HepG2 (cell line): ENCODE measurements at regions of chr19 and their contacts with region 1.

Region 1: DNA sequence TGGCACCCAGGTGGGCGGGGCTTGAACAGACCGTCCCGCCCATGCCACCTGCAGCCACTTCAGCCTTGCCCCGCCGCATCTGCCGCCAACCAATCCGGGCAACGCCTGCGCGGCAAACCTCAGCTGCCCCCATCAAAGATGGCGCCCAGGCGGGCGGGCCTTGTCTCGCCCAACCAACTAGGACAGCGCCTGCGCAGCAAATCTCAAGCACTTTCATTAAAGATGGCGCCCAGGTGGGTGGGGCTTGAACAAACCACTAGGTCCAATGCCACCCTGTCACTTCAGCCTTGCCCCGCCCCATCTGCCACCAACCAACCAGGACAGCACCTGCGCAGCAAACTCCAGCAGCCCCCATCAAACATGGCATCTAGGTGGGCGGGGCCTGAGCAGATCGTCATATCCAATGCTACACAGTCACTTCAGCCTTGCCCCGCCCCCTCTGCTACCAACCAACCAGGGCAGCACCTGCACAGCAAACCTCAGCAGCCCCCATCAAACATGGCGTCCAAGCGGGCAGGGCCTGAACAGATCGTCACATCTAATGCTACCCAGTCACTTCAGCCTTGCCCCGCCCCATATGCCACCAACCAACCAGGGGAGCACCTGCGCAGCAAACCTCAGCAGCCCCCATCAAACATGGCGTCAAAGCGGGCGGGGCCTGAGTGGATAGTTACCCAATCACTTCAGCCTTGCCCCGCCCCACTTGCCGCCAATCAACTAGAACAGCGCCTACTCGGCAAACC is 1.4 kb downstream of the PEG3 start:
- DNase-seq: peak; percentile 97
- ATAC-seq: peak; percentile 63
- H3K4me3 ChIP-seq: peak overlapping the region; percentile 55 to 96 (median 84); a peak in 5 of 6 replicates
- H3K27ac ChIP-seq: peak overlapping the region; percentile 90
- H3K4me1 ChIP-seq: peaks cover 49% of the 10 kb centered on the region
- H3K27me3 ChIP-seq: no peaks in the 10 kb centered on the region
- CTCF ChIP-seq: no peak
- EP300 ChIP-seq: 0 out of 4 replicates have a peak, but pooled peaks of 1 of the 2 experiments have one; percentile 15
- POLR2A ChIP-seq: peak; percentile 40 to 75
- RAD21 ChIP-seq: no peak

Region 2: GRCh38 chr19:56567274-56568120 is 271.6 kb before region 1 on chr19 and contains the start of gene ZNF470:
- CTCF ChIA-PET with region 1: no interaction called
- POLR2A ChIA-PET with region 1: no interaction called
- in situ Hi-C with region 1: no loop called
- intact Hi-C with region 1: no loop called
- DNase-seq: no peak
- ATAC-seq: no peak
- H3K4me3 ChIP-seq: no peak within 1 kb of the TSS
- H3K27ac ChIP-seq: no peak within 1 kb of the TSS
- H3K4me1 ChIP-seq: no peaks in the 10 kb centered on the region
- H3K27me3 ChIP-seq: no peaks in the 10 kb centered on the region
- CTCF ChIP-seq: no peak
- EP300 ChIP-seq: no peak
- POLR2A ChIP-seq: no peak
- RAD21 ChIP-seq: no peak
- total RNA-seq, gene ZNF470: not detected in 2 replicates

Region 3: DNA sequence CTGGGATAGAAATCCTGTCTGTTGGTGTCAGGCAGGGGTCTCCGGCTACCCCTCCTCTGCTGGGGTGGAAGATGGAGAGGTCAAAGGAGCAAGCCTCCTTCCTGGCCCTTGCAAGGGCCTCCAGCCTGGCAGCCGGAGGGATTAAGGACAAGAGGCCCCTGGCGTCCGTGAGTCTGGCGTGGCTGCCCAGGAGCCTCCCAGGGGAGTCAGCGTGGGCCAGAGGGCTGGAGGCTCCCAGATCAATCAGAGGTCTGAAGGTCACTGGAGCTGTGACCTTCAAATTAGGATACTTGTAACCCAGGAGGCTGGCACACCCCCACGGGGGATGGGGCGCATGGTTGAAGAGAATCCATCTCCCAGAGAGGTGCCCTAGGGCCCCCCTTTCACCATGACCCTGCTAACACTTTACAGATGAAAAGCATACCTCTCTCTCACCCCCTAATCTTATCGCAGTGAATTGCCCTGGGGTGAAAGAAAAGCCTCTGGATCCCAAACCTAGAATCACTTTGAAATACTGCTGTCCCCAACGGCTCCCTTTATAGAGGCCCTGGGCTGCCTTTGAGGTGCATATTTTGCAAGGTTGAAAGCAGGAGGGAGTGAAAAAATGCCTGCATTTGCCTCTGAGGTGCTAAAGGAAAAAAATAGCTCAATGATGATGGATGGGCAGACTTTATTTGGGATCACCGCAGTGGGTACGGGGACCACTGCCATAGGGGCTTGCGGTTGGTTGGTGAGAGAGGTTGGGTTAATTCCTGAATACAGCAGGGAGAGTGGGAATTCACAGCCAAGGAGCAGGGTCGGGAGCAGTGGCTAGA is 46.3 kb after region 1 on chr19:
- CTCF ChIA-PET with region 1: no interaction called
- POLR2A ChIA-PET with region 1: interaction called, 28 read pairs
- in situ Hi-C with region 1: no loop called
- intact Hi-C with region 1: no loop called
- DNase-seq: peak; percentile 69
- ATAC-seq: peak; percentile 60
- H3K4me3 ChIP-seq: peak overlapping the region in 1 of 3 experiments; percentile 30; a peak in 2 of 6 replicates
- H3K27ac ChIP-seq: peak overlapping the region; percentile 84
- H3K4me1 ChIP-seq: peaks cover 72% of the 10 kb centered on the region
- H3K27me3 ChIP-seq: no peaks in the 10 kb centered on the region
- CTCF ChIP-seq: no peak
- EP300 ChIP-seq: peak; percentile 59 to 83; a peak in 1 of 4 replicates
- POLR2A ChIP-seq: no peak
- RAD21 ChIP-seq: no peak; the same call in 1 of the 2 replicates

Region 4: GRCh38 chr19:56900573-56901097 is 61.6 kb after region 1 on chr19:
- CTCF ChIA-PET with region 1: no interaction called
- POLR2A ChIA-PET with region 1: interaction called, 27 read pairs
- in situ Hi-C with region 1: no loop called
- intact Hi-C with region 1: no loop called
- DNase-seq: peak; percentile 98
- ATAC-seq: peak; percentile 96
- H3K4me3 ChIP-seq: peak overlapping the region in 1 of 3 experiments; percentile 30; a peak in 1 of 6 replicates
- H3K27ac ChIP-seq: peak overlapping the region; percentile 98
- H3K4me1 ChIP-seq: peaks cover 65% of the 10 kb centered on the region
- H3K27me3 ChIP-seq: no peaks in the 10 kb centered on the region
- CTCF ChIP-seq: peak; percentile 17; the same call in 1 of the 2 replicates
- EP300 ChIP-seq: peak; percentile 98 to 99
- POLR2A ChIP-seq: peak; percentile 72 to 75
- RAD21 ChIP-seq: peak; percentile 68

Region 5: DNA sequence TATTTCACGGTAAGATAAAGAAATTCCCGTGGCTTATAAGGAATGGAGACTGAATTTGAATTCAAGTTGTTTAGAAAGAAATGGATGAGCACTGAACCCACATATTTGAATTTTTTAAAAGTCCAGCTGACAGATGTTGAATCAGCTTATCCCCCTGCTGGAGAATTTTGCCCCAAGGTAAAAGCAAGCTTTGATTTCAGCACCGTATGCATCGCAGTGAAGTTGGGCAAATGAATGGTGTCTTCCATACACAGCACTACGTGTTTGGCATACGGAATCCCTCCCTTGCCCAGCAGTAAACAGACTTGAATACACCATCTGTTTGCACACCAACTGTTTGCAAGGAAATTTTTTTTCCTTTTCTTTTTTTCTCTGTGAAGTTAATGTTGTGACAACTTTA is 78.9 kb after region 1 on chr19:
- CTCF ChIA-PET with region 1: interaction called, 3 read pairs
- POLR2A ChIA-PET with region 1: interaction called, 11 read pairs
- in situ Hi-C with region 1: no loop called
- intact Hi-C with region 1: loop called (anchors 1 kb)
- DNase-seq: peak; percentile 75
- ATAC-seq: peak; percentile 82
- H3K4me3 ChIP-seq: peak overlapping the region in 1 of 3 experiments; percentile 24; a peak in 1 of 6 replicates
- H3K27ac ChIP-seq: peak overlapping the region; percentile 70
- H3K4me1 ChIP-seq: peaks cover 57% of the 10 kb centered on the region
- H3K27me3 ChIP-seq: no peaks in the 10 kb centered on the region
- CTCF ChIP-seq: peak; percentile 42
- EP300 ChIP-seq: peak in 1 of 2 experiments; percentile 53; a peak in 1 of 4 replicates
- POLR2A ChIP-seq: no peak
- RAD21 ChIP-seq: no peak

Region 6: GRCh38 chr19:57068921-57069697 is 230.0 kb after region 1 on chr19:
- CTCF ChIA-PET with region 1: no interaction called
- POLR2A ChIA-PET with region 1: interaction called, 18 read pairs
- in situ Hi-C with region 1: loop called (anchors 10 kb)
- intact Hi-C with region 1: loop called (anchors 1 kb)
- DNase-seq: peak; percentile 63
- ATAC-seq: peak; percentile 91
- H3K4me3 ChIP-seq: peak overlapping the region in 1 of 3 experiments; percentile 24; a peak in 1 of 6 replicates
- H3K27ac ChIP-seq: no peak overlapping the region
- H3K4me1 ChIP-seq: peaks cover 32% of the 10 kb centered on the region
- H3K27me3 ChIP-seq: no peaks in the 10 kb centered on the region
- CTCF ChIP-seq: peak; percentile 93
- EP300 ChIP-seq: no peak
- POLR2A ChIP-seq: no peak
- RAD21 ChIP-seq: peak; percentile 89

Region 7: DNA sequence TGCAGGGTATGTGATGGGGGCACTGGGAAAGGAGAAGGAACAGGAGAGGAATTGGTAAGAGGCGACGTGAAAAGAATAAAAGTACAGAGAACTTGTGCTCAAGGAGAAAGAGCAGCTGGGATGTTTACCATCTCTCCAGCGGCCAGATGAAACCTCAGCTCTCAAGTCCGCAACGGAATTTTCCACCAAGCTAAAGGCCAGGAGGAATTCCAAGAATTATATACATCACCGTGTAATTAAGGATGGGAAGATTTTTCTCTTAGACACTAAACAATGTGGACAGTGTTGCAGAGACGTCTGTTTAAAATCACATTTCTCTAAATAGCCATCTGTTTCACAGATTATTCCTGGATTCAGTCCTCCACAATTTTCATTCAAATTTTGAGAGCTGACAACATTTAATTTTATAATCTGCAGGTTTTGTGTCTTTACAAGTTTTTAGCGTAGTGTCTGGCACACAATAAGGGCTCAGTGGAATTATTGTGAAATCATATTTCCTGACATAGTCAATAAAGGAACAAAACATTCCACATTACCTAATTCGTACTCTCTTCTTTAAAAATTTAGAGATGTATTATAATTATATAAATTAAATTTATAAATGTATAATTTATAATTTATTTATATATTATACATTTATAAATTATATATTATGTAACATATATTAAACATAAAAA is 257.7 kb after region 1 on chr19:
- CTCF ChIA-PET with region 1: no interaction called
- POLR2A ChIA-PET with region 1: interaction called, 3 read pairs
- in situ Hi-C with region 1: no loop called
- intact Hi-C with region 1: loop called (anchors 1 kb)
- DNase-seq: peak; percentile 75
- ATAC-seq: peak; percentile 52
- H3K4me3 ChIP-seq: peak overlapping the region in 2 of 3 experiments; percentile 21 to 47; a peak in 4 of 6 replicates
- H3K27ac ChIP-seq: peak overlapping the region; percentile 66
- H3K4me1 ChIP-seq: peaks cover 27% of the 10 kb centered on the region
- H3K27me3 ChIP-seq: no peaks in the 10 kb centered on the region
- CTCF ChIP-seq: no peak
- EP300 ChIP-seq: peak in 1 of 2 experiments; percentile 79; a peak in 2 of 4 replicates
- POLR2A ChIP-seq: no peak
- RAD21 ChIP-seq: no peak; the same call in 1 of the 2 replicates